Activated CD8-positive, alpha-beta T cell treated with anti-CD3 and anti-CD28 coated beads, Interleukin-2, amount 10 ng/mL, durations not matched to agents 7 days and 5 days (primary cell): ENCODE measurements at regions of chr1 and their contacts with region 1.

Region 1: GRCh38 chr1:32716312-32717148 is 14.0 kb upstream of the SYNC start:
- DNase-seq: peak; percentile 74
- ATAC-seq: peak; percentile 71
- H3K4me3 Mint-ChIP-seq: no peak overlapping the region
- H3K27ac Mint-ChIP-seq: no peak overlapping the region
- H3K4me1 Mint-ChIP-seq: peaks cover 18% of the 10 kb centered on the region
- H3K27me3 Mint-ChIP-seq: peaks cover 6% of the 10 kb centered on the region

Region 2: DNA sequence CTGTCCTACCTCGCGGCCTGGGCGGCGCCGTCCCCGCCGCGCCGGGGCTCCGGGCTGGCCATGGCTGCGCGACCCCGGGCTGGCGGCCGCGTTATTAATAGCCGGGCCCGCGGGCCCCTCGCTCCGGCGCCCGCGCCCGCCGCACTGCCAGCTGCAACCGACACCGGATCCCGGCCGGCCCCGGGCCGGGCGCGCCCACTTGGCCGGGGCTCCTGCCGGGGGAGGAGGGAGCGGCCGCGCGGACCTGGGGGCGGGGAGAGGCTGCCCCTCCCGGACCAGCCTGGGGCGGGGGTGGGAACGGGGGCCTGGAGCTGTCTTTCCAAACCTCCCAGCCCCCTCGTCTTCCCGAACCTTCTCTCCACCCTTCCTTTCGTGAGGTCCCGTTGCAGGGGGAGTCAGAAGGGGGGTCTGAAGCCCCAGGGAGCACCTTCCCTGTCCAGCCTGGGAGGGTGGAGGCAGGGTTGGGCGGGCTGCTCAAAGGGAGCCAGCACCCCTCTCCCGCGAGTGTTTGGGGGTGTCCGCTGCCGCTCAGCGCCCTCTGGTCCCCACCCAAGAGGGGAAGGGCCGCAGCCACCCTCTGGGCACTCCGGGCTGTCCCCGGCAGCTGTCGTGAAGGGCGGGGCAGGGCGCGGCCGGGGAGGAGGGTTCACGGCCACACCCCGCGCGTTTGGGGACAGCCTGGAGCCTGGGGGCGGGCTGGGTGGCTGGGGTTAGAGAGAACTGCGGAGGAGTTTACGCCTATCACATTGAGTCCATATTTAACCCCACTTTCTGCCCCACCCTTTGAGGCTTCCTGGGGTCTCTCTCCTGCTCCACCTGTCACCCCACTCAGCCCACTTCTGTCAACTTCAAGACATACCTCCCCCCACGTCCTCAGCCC is 13.7 kb before region 1 on chr1 and contains the start of gene SYNC:
- CTCF ChIA-PET with region 1: interaction called, 20 read pairs
- POLR2A ChIA-PET with region 1: interaction called, 3 read pairs
- DNase-seq: peak; percentile 33
- ATAC-seq: peak; percentile 76
- H3K4me3 Mint-ChIP-seq: no peak within 1 kb of the TSS
- H3K27ac Mint-ChIP-seq: no peak within 1 kb of the TSS
- H3K4me1 Mint-ChIP-seq: peaks cover 8% of the 10 kb centered on the region
- H3K27me3 Mint-ChIP-seq: peaks cover 37% of the 10 kb centered on the region
- total RNA-seq, gene SYNC: not detected

Region 3: GRCh38 chr1:32741413-32742198 is 25.1 kb after region 1 on chr1:
- CTCF ChIA-PET with region 1: interaction called, 12 read pairs
- POLR2A ChIA-PET with region 1: no interaction called
- DNase-seq: no peak
- ATAC-seq: peak; percentile 66
- H3K4me3 Mint-ChIP-seq: peak overlapping the region; percentile 63
- H3K27ac Mint-ChIP-seq: no peak overlapping the region
- H3K4me1 Mint-ChIP-seq: peaks cover 2% of the 10 kb centered on the region
- H3K27me3 Mint-ChIP-seq: peaks cover 33% of the 10 kb centered on the region

Region 4: GRCh38 chr1:32761253-32761880 is 44.8 kb after region 1 on chr1:
- CTCF ChIA-PET with region 1: interaction called, 22 read pairs
- POLR2A ChIA-PET with region 1: no interaction called
- DNase-seq: no peak
- ATAC-seq: no peak
- H3K4me3 Mint-ChIP-seq: no peak overlapping the region
- H3K27ac Mint-ChIP-seq: no peak overlapping the region
- H3K4me1 Mint-ChIP-seq: peaks cover 13% of the 10 kb centered on the region
- H3K27me3 Mint-ChIP-seq: peaks cover 4% of the 10 kb centered on the region

Region 5: DNA sequence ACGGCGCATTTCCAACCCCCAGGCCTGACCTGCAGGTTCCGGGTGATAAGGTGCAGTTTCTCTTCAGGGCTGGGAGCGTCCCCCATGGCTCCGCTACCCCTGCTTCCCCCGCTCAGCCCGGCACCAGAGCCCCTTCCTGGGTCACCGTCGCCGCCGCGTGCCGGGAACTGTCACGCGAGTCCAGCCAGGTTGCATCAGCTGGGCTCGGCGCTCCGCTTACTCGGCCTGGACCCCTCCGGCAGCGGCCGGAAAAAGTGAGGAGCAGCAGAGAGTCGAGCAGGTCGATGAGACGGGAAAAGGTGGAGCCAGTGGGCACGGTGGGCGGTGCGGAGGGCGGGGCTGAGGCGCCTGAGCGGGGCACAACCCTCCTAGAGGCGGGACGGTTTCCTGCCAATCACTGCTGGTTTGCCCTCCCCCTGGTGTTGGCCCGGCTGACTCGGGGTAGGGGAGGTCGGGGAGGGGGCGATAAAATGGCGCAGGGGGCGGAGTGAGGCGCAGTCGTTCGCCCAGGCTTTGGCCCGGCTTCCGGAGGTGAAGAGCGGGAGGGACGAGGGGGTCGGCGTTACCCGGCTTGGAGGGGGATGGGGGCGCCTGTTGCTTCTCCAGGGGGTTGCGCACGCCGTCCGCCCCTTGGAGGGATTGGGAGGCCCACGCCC is 100.8 kb after region 1 on chr1 and contains the starts of genes S100PBP and YARS1:
- CTCF ChIA-PET with region 1: interaction called, 13 read pairs
- POLR2A ChIA-PET with region 1: no interaction called
- DNase-seq: peak; percentile 100
- ATAC-seq: peak; percentile 94
- H3K4me3 Mint-ChIP-seq: peak within 1 kb of the TSS; percentile 84
- H3K27ac Mint-ChIP-seq: peak within 1 kb of the TSS; percentile 94
- H3K4me1 Mint-ChIP-seq: peaks cover 55% of the 10 kb centered on the region
- H3K27me3 Mint-ChIP-seq: no peaks in the 10 kb centered on the region
- total RNA-seq, gene S100PBP: 78.3 to 78.9 TPM
- total RNA-seq, gene YARS1: 175 to 189 TPM